Endothelial cell of umbilical vein (primary cell): ENCODE measurements at regions of chr13 and their contacts with region 1.

Region 1: DNA sequence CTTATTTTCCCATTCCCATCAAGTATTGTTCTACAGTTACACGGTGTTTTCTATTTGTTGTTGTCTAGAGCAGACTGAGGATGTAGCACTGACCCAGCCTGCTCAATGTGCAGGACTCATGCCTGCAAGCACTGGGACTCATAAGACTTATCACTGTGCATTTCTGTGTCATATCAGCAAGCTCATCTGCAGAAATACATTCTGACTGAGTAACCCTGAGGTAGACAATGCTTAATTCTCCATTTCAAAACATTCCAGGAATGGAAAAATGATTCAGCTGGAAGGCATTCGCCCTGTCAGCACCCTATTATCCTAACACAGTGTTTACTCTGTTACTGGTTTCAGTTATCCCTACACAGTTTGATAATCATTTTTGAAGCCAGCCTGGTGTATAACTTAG is 2506.4 kb downstream of the PCDH9 start:
- DNase-seq: peak; percentile 97
- H3K4me3 ChIP-seq: no peak overlapping the region
- H3K27ac ChIP-seq: peak overlapping the region; percentile 89
- H3K4me1 ChIP-seq: peaks cover 20% of the 10 kb centered on the region
- H3K27me3 ChIP-seq: no peaks in the 10 kb centered on the region
- CTCF ChIP-seq: no peak
- POLR2A ChIP-seq: peak; percentile 60

Region 2: DNA sequence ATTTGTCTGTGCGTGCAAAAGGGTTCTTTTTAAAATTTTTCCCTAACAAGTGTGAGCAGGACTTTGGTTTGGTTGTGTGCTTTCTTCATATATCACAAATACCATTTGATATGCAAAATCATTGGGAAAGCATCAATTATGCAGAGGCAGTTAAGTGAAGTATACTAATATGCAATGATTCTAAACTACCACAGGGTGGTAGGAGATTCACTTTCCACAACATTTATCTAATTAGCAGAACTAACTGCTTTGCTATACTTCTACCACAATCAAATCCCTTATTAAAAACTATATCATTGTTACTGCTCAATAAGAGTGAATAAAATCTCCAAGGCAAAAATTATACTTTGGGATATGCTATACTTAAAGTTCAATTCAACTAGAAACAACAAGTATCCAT is 569.2 kb before region 1 on chr13:
- CTCF ChIA-PET with region 1: no interaction called
- POLR2A ChIA-PET with region 1: no interaction called
- dilution Hi-C with region 1: no loop called
- intact Hi-C with region 1: loop called (anchors 1 kb)
- DNase-seq: peak; percentile 69
- H3K4me3 ChIP-seq: no peak overlapping the region
- H3K27ac ChIP-seq: no peak overlapping the region
- H3K4me1 ChIP-seq: peaks cover 12% of the 10 kb centered on the region
- H3K27me3 ChIP-seq: no peaks in the 10 kb centered on the region
- CTCF ChIP-seq: peak; percentile 11 to 30
- POLR2A ChIP-seq: no peak

Region 3: DNA sequence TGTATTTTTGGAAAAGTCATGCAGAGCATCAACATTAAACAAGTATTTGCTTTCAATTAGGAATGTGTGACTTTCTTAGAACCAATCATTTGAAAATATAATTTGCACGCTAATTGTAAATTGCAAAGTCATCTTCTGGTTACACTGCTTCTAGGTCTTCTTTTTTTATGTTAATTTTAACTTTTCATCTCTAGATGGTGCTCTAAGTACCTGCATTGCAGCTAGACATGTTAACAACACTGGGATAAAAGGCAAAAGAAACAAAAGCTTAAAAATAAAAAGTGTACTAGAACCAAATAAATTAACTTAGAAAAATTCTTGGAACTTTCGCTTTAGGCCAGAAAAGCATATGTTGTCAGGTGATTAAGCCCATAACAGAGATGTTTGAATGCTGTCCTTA is 251.8 kb before region 1 on chr13:
- CTCF ChIA-PET with region 1: interaction called, 9 read pairs
- POLR2A ChIA-PET with region 1: no interaction called
- dilution Hi-C with region 1: no loop called
- intact Hi-C with region 1: loop called (anchors 5 kb)
- DNase-seq: peak; percentile 66
- H3K4me3 ChIP-seq: no peak overlapping the region
- H3K27ac ChIP-seq: no peak overlapping the region
- H3K4me1 ChIP-seq: no peaks in the 10 kb centered on the region
- H3K27me3 ChIP-seq: no peaks in the 10 kb centered on the region
- CTCF ChIP-seq: peak in 1 of 2 donors; percentile 22
- POLR2A ChIP-seq: no peak

Region 4: GRCh38 chr13:64778002-64778401 is 54.3 kb after region 1 on chr13:
- CTCF ChIA-PET with region 1: interaction called, 3 read pairs
- POLR2A ChIA-PET with region 1: no interaction called
- dilution Hi-C with region 1: no loop called
- intact Hi-C with region 1: loop called (anchors 1 kb)
- DNase-seq: peak; percentile 72
- H3K4me3 ChIP-seq: no peak overlapping the region
- H3K27ac ChIP-seq: peak overlapping the region; percentile 11
- H3K4me1 ChIP-seq: peaks cover 13% of the 10 kb centered on the region
- H3K27me3 ChIP-seq: no peaks in the 10 kb centered on the region
- CTCF ChIP-seq: no peak
- POLR2A ChIP-seq: no peak

Region 5: GRCh38 chr13:64912141-64912540 is 188.4 kb after region 1 on chr13:
- CTCF ChIA-PET with region 1: no interaction called
- POLR2A ChIA-PET with region 1: no interaction called
- dilution Hi-C with region 1: no loop called
- intact Hi-C with region 1: loop called (anchors 1 kb)
- DNase-seq: peak; percentile 67
- H3K4me3 ChIP-seq: no peak overlapping the region
- H3K27ac ChIP-seq: peak overlapping the region; percentile 66
- H3K4me1 ChIP-seq: peaks cover 19% of the 10 kb centered on the region
- H3K27me3 ChIP-seq: no peaks in the 10 kb centered on the region
- CTCF ChIP-seq: no peak
- POLR2A ChIP-seq: no peak